Activated CD8-positive, alpha-beta memory T cell treated with anti-CD3 and anti-CD28 coated beads, Interleukin-2, amount 10 ng/mL, durations not matched to agents 7 days and 5 days (primary cell): ENCODE measurements at regions of chr2 and their contacts with region 1.

Region 1: GRCh38 chr2:9984217-9984739 is 32.8 kb downstream of the GRHL1 start:
- DNase-seq: no peak
- ATAC-seq: peak; percentile 78
- H3K4me3 Mint-ChIP-seq: no peak overlapping the region
- H3K27ac Mint-ChIP-seq: no peak overlapping the region
- H3K4me1 Mint-ChIP-seq: peaks cover 13% of the 10 kb centered on the region
- H3K27me3 Mint-ChIP-seq: peaks cover 28% of the 10 kb centered on the region

Region 2: DNA sequence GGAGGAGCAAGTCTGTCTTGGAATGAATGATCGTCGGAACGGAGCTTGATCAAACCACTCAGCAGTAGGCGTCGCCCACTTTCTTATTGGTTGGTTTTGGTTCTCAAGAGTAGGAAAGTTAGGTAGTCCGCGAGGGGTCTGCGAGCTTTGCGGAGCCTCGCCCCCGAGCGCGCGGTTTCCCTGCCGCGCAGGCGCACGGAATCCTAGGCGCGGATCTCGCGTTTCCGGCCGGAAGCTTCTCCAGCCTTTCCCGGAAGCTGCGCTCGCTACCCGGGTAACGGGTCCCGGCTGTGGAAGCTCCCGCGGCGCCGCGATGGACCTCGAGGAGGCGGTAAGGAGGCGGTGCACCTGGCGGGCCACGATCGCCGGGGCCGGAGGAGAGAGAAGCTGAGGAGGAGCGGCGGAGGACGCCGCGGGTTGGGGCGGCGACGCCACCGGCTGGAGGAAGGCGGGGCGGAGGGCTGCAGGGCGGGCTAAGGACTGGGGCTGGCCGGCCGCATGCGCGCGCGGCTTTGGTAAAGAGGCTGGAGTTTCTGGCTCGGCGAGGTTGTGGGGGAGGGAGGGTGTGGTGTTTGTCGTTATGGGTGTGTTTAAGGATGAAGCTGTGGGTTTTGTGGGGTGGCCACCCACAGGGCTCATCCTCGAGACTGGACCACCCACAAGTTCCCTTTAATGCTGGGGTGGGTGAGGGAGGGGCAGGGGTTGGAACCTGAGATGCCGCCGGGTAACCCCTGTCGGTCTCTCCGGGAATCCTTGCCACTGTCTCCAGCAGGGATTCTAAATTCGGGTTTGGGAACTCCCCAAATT is 140.8 kb before region 1 on chr2 and contains the start of gene TAF1B:
- CTCF ChIA-PET with region 1: interaction called, 13 read pairs
- DNase-seq: peak; percentile 94
- ATAC-seq: peak; percentile 89
- H3K4me3 Mint-ChIP-seq: peak within 1 kb of the TSS; percentile 91
- H3K27ac Mint-ChIP-seq: peak within 1 kb of the TSS; percentile 86
- H3K4me1 Mint-ChIP-seq: peaks cover 43% of the 10 kb centered on the region
- H3K27me3 Mint-ChIP-seq: peaks cover 2% of the 10 kb centered on the region
- total RNA-seq, gene TAF1B: 29.5 to 31.2 TPM

Region 3: DNA sequence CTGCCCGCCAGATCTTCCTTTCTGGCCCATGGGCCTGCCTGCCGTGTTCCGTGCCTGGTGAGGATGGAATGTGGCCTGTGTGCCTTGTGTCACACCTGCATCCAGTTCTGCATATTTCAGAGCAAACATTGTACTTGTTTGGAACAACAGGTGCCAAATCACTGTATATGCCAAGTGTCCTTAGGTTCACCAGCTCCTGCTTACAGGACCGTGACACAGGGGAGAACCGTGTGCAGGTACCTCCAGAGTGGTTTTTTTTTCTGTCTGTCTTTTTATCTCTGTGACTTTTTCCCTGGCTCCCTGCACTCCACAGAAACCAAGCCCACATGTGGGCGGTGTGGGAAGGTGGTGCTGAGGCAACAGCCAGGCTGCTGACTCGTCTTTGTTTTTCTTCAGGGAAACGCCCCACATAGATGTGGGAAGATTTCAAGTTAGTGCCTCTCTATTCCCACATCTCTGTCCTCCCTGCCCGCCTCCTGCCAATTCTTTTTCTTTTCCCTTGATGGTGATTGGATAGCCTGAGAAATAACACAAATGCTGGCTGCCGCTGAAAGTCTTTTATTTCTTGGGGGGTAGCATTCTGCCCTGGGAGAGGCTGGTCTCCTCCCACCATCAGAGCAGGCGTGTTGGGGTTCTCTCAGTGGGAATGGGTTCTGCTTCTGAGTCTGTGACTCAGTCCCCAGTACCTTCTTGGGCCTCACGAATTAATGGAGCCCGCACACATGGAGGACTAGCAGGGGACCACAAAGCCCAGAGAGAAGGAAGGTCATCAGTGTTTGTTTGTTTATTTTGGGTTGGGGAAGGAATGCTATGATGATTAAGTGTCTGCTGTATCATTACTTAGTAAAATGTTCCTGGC is 11.4 kb before region 1 on chr2:
- CTCF ChIA-PET with region 1: interaction called, 34 read pairs
- DNase-seq: no peak
- ATAC-seq: no peak
- H3K4me3 Mint-ChIP-seq: no peak overlapping the region
- H3K27ac Mint-ChIP-seq: no peak overlapping the region
- H3K4me1 Mint-ChIP-seq: peaks cover 10% of the 10 kb centered on the region
- H3K27me3 Mint-ChIP-seq: peaks cover 4% of the 10 kb centered on the region

Region 4: GRCh38 chr2:10028988-10029874 is 45.0 kb after region 1 on chr2:
- CTCF ChIA-PET with region 1: interaction called, 48 read pairs
- DNase-seq: peak; percentile 83
- ATAC-seq: peak; percentile 93
- H3K4me3 Mint-ChIP-seq: peak overlapping the region; percentile 53
- H3K27ac Mint-ChIP-seq: peak overlapping the region; percentile 84
- H3K4me1 Mint-ChIP-seq: peaks cover 22% of the 10 kb centered on the region
- H3K27me3 Mint-ChIP-seq: no peaks in the 10 kb centered on the region

Region 5: DNA sequence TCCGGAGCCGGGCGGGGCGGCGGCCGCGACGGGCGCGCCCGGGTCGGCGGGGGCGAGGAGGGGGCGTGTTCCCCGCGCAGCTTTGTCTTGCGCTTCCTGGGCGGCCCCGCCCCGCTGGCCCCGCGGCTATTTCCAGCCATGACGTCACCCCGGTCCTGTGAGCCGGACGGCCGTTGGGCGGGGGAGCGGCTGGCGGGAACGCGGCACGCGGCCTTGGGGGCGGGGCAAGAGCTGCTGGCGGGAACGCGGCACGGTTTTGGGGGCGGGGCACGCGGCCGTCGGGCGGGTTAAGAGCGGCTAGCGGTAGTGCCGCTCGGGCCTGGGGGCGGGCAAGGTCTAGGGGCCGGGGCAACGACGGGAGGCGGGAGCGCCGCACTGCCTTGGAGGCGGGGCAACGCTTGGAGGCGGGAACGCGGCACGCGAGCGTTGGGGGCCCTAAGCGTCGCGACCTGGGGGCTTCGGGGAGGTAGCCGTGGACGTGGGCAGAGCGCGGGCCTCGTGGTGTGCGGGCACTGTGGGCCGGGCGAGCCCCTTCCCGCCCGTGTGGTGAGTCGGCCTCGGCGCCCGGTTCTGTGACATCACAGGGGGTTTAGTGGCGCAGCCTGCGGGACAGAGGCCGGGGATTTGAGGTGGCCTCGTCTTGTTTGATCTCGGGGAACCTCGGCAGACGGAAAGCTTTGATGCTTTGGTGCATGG is 59.8 kb after region 1 on chr2:
- CTCF ChIA-PET with region 1: interaction called, 169 read pairs
- DNase-seq: peak; percentile 96
- ATAC-seq: peak; percentile 73
- H3K4me3 Mint-ChIP-seq: peak overlapping the region; percentile 68
- H3K27ac Mint-ChIP-seq: peak overlapping the region; percentile 79
- H3K4me1 Mint-ChIP-seq: peaks cover 13% of the 10 kb centered on the region
- H3K27me3 Mint-ChIP-seq: peaks cover 21% of the 10 kb centered on the region

Region 6: GRCh38 chr2:10097352-10098148 is 113.3 kb after region 1 on chr2:
- CTCF ChIA-PET with region 1: interaction called, 12 read pairs
- DNase-seq: peak; percentile 52
- ATAC-seq: peak; percentile 82
- H3K4me3 Mint-ChIP-seq: no peak overlapping the region
- H3K27ac Mint-ChIP-seq: no peak overlapping the region
- H3K4me1 Mint-ChIP-seq: peaks cover 2% of the 10 kb centered on the region
- H3K27me3 Mint-ChIP-seq: peaks cover 37% of the 10 kb centered on the region